WTC11 (cell line): ENCODE measurements at regions of chr11 and their contacts with region 1.

Region 1: DNA sequence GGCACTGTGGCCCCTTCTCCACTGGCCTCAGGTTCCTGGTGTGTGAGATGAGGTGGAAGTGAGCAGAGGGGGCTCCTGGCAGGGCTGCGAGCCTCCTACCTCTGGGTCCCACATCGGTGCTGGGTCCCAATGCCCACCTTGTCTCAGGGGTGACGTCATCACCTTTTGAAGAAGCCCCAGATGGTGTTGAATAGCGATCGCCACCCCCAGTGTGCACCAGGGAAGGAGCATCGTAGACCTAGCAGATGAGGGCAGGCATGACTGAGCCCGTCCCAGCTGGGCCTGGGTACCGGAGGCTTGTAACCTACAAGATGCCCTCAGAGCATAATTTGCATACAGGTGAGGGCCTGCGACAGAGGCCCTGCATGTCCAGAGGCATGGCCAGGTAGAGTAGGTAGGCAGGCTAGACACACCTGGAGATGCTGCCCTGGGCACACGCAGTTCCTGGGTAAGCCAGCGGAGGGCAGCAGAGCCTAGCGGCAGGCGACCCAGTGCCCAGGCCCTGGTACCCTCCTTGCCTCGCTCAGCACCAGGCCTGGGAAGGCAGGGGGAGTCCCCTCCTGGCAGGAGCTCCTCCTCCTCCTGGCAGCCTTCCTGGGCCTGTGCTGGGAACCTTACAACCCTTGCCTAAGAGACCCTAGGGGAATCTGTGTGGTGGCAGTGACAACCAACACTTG is 52.5 kb downstream of the TPCN2 start:
- DNase-seq: peak; percentile 83
- ATAC-seq: peak; percentile 91
- H3K4me3 Mint-ChIP-seq: no peak overlapping the region
- H3K27ac Mint-ChIP-seq: no peak overlapping the region
- H3K4me1 Mint-ChIP-seq: peaks cover 3% of the 10 kb centered on the region; the same call in 1 of the 2 replicates
- H3K27me3 Mint-ChIP-seq: no peaks in the 10 kb centered on the region
- CTCF ChIP-seq: peak; percentile 96

Region 2: DNA sequence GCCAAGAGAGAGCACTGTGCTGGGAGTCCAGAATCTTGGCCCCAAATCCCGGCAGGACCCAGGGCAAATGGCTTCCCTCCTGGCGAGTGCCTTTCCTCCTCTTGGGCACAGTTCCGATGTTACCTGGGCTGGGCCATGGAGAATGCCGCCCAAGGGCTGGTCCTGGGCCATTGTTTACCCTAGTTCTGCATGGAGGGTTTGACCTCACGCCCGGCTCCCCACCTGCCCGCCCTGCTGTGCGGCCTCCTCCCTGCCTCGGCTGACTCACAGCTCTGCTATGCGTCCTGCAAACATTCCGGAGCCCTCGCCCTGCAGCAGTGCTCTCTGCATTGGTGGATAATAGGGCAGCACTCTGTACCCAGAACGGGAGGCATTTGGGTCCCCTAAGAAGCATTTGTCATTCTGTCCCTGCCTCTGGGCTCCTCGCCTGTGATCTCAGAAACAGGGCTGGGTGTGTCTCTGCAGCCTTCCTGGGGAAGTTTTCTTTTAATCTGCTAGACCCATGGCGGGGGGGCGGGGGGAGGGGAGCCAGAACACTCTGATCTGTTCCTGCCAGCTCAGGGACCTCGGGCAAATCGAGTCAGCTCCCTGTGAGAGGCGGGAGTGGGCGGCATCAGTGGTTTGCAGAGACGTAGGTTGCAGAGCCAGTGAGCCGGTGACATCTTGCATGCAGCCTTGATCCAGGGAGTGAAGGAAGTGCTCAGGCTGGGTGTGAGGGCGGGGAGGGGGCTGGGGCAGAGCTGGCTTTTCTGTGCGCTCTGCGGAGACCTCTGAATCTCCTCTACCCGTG is 21.6 kb after region 1 on chr11:
- CTCF ChIA-PET with region 1: interaction called, 11 read pairs
- POLR2A ChIA-PET with region 1: no interaction called
- DNase-seq: peak; percentile 86
- ATAC-seq: peak; percentile 88
- H3K4me3 Mint-ChIP-seq: peak overlapping the region; percentile 50
- H3K27ac Mint-ChIP-seq: peak overlapping the region; percentile 79; the same call in 1 of the 2 replicates
- H3K4me1 Mint-ChIP-seq: peaks cover 27% of the 10 kb centered on the region
- H3K27me3 Mint-ChIP-seq: no peaks in the 10 kb centered on the region; the same call in 1 of the 2 replicates
- CTCF ChIP-seq: no peak

Region 3: GRCh38 chr11:69257838-69258658 is 156.8 kb after region 1 on chr11:
- CTCF ChIA-PET with region 1: interaction called, 12 read pairs
- POLR2A ChIA-PET with region 1: no interaction called
- DNase-seq: no peak
- ATAC-seq: peak; percentile 88
- H3K4me3 Mint-ChIP-seq: no peak overlapping the region
- H3K27ac Mint-ChIP-seq: no peak overlapping the region
- H3K4me1 Mint-ChIP-seq: peaks cover 26% of the 10 kb centered on the region
- H3K27me3 Mint-ChIP-seq: peaks cover 30% of the 10 kb centered on the region
- CTCF ChIP-seq: no peak

Region 4: DNA sequence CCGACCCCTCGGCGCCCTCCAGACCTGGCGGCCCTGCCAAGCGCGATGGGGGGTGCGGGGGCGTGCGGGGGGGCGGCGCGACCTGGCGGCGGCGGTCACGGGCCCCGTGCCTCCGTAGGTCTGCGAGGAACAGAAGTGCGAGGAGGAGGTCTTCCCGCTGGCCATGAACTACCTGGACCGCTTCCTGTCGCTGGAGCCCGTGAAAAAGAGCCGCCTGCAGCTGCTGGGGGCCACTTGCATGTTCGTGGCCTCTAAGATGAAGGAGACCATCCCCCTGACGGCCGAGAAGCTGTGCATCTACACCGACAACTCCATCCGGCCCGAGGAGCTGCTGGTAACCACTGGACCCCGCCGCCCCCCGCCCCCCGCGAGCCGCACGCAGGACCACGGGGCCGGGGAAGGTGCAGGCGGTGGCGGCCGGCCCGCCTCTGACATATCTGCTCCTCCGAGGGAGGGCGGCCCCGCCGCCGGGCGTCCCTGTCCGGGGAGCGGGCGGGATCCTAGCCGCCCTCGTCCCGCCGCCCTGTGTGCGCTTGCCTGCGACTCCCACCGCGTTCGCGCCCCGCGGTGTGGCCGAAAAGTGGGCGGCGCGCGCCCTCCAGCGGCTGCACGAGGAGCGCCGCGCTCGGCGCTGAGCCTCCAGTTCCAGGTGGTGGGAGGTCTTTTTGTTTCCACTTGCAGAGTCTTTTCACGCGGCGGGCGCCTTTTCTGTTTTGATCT is 541.8 kb after region 1 on chr11:
- CTCF ChIA-PET with region 1: interaction called, 11 read pairs
- POLR2A ChIA-PET with region 1: no interaction called
- DNase-seq: peak; percentile 77
- ATAC-seq: peak; percentile 2
- H3K4me3 Mint-ChIP-seq: peak overlapping the region; percentile 67
- H3K27ac Mint-ChIP-seq: no peak overlapping the region
- H3K4me1 Mint-ChIP-seq: peaks cover 8% of the 10 kb centered on the region; the same call in 1 of the 2 replicates
- H3K27me3 Mint-ChIP-seq: no peaks in the 10 kb centered on the region
- CTCF ChIP-seq: peak; percentile 92

Region 5: GRCh38 chr11:69683764-69684333 is 582.6 kb after region 1 on chr11:
- CTCF ChIA-PET with region 1: interaction called, 15 read pairs
- POLR2A ChIA-PET with region 1: no interaction called
- DNase-seq: peak; percentile 75
- ATAC-seq: peak; percentile 69
- H3K4me3 Mint-ChIP-seq: no peak overlapping the region
- H3K27ac Mint-ChIP-seq: no peak overlapping the region
- H3K4me1 Mint-ChIP-seq: peaks cover 5% of the 10 kb centered on the region
- H3K27me3 Mint-ChIP-seq: peaks cover 10% of the 10 kb centered on the region
- CTCF ChIP-seq: peak; percentile 59